Panc1 (cell line): ENCODE measurements at regions of chr19 and their contacts with region 1.

Region 1: GRCh38 chr19:45087531-45087930 is 5.4 kb upstream of the PPP1R37 start:
- DNase-seq: no peak
- ATAC-seq: no peak
- H3K4me3 ChIP-seq: no peak overlapping the region
- H3K27ac ChIP-seq: no peak overlapping the region
- H3K4me1 ChIP-seq: peaks cover 5% of the 10 kb centered on the region; the same call in 1 of the 2 replicates
- H3K27me3 ChIP-seq: no peaks in the 10 kb centered on the region
- CTCF ChIP-seq: no peak

Region 2: DNA sequence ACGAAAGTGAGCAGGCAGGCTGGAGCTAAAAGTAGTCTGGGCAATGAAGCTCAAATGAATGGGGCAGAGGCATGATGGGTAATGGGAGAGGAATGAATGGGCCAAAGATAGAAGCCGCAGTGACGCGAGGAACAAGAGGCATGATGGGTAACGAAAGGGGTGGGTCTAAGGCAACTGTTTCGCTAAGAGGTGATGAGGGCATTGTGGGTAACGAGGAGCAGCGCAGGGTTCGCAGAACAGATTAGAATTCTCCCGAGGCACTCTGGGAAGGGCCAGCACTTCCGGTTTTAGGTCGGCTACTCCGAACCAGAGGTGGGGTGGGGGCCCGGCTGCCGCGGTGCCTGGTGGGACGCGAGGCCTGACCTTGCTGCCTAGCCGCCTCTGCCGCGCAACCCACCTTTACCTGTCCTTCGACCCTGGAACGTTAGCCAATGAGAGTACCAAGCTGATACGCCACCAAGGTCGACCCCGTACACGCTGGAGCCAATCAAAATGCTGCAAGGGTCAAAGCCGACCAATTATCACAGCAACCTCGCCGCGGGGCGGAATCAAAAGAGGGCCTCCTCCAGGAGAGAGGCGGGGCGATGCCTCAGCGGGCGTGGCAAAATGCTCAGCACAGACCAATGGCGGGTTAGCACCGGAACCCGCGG is 197.0 kb before region 1 on chr19:
- CTCF ChIA-PET with region 1: no interaction called
- POLR2A ChIA-PET with region 1: interaction called, 11 read pairs
- in situ Hi-C with region 1: no loop called
- intact Hi-C with region 1: no loop called
- DNase-seq: peak; percentile 97
- ATAC-seq: peak; percentile 92
- H3K4me3 ChIP-seq: peak overlapping the region; percentile 42 to 65
- H3K27ac ChIP-seq: peak overlapping the region; percentile 93
- H3K4me1 ChIP-seq: peaks cover 7% of the 10 kb centered on the region; the same call in 1 of the 2 replicates
- H3K27me3 ChIP-seq: no peaks in the 10 kb centered on the region
- CTCF ChIP-seq: no peak

Region 3: DNA sequence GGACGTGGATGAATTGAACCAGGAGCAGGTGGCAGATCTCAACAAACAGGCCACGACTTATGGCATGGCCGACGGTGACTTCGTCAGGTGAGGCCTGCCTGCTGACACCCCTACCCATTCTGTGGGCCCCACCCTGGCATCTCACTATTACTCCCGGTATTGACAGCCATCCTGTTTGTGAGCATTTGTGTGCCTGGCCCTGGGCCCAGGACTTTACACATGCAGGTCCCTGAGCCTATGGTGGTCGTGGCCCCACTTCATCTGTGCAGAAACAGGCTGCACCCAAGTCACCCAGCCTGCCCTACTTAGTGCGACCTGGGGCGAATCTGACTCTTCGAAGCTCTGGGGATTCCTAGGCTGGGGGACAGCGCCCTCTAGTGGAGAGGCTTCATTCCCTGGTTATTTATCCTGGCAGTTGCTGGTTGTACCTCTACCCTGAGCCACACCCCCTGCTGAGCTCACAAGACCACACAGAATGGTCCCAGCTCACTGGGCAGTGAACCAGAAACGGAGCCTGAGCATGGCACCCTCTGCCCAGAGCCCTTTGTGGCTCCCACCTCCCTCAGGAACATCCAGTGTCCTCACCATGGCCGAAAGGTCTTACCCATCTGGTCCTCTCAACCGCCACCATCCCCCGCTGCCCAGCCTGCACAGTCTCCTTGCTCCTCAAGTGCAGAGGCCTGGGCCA is 28.1 kb before region 1 on chr19:
- CTCF ChIA-PET with region 1: no interaction called
- POLR2A ChIA-PET with region 1: no interaction called
- in situ Hi-C with region 1: no loop called
- intact Hi-C with region 1: no loop called
- DNase-seq: peak; percentile 42
- ATAC-seq: peak; percentile 82
- H3K4me3 ChIP-seq: no peak overlapping the region
- H3K27ac ChIP-seq: no peak overlapping the region
- H3K4me1 ChIP-seq: no peaks in the 10 kb centered on the region
- H3K27me3 ChIP-seq: no peaks in the 10 kb centered on the region
- CTCF ChIP-seq: peak; percentile 88